ENCODE measurements at regions of chr5 and their contacts with region 1.

Region 1: DNA sequence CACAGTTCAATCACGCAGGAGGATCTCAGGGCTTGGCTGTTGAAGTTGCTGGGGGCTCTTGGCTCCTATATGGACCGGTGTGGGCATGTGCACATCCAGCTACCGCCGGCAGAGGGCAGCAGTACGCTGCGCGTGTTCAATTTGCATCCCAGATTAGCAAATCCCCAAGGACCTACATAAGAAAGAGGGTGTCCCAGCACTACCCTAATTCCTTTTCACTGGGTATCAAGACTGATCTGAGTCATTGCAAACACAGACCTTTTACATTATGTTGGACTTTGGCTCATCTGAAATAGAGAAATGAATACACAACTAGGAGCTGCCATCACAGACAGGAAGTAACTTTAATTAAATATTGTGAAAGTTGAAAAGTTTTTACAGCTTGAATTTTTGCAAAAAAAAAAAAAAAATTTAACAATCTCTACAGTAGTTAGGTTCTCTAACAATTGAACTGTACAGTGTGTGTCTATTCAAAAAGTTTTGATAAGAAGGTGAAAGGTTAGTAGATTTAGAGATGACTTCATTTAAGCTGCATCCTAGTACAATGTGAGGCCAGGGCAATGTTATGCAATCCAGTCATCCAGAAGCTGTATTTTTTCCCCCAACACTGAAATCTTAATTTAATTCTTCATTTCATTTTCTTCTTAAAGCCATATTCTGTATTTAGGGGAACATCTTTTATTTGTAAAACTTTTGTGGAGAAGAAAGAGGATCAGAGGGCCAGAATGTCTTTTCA is 404.0 kb downstream of the EBF1 start:
- DNase-seq: peak; percentile 90
- H3K4me3 Mint-ChIP-seq: no peak overlapping the region
- H3K27ac Mint-ChIP-seq: no peak overlapping the region
- H3K4me1 Mint-ChIP-seq: peaks cover 2% of the 10 kb centered on the region
- H3K27me3 Mint-ChIP-seq: peaks cover 14% of the 10 kb centered on the region

Region 2: GRCh38 chr5:158174918-158175851 is 520.6 kb before region 1 on chr5:
- intact Hi-C with region 1: loop called (anchors 1 kb)
- DNase-seq: peak; percentile 84
- H3K4me3 Mint-ChIP-seq: no peak overlapping the region
- H3K27ac Mint-ChIP-seq: no peak overlapping the region
- H3K4me1 Mint-ChIP-seq: no peaks in the 10 kb centered on the region
- H3K27me3 Mint-ChIP-seq: no peaks in the 10 kb centered on the region

Region 3: DNA sequence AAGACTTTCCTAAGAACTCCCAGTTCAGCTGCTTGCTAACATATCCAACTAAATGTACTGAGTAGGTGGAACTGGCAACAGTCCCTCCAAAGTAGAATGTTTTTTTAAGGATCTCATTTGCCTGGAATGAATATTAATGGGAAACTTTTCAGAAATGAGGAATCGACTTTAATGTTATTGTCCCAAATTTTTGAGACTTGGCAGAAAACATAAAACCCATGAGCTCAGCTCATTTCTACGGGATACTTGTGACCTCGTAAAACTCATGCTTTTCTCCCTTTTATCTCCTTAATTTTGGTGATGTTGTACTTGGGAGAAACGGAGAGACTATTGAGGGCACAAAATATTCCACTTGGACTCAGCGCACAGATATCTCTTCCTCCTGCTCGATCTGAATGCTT is 107.2 kb after region 1 on chr5:
- intact Hi-C with region 1: no loop called
- DNase-seq: no peak
- H3K4me3 Mint-ChIP-seq: no peak overlapping the region
- H3K27ac Mint-ChIP-seq: no peak overlapping the region
- H3K4me1 Mint-ChIP-seq: peaks cover 2% of the 10 kb centered on the region
- H3K27me3 Mint-ChIP-seq: peaks cover 8% of the 10 kb centered on the region

Region 4: GRCh38 chr5:158943057-158943456 is 247.3 kb after region 1 on chr5:
- intact Hi-C with region 1: no loop called
- DNase-seq: no peak
- H3K4me3 Mint-ChIP-seq: no peak overlapping the region
- H3K27ac Mint-ChIP-seq: no peak overlapping the region
- H3K4me1 Mint-ChIP-seq: no peaks in the 10 kb centered on the region
- H3K27me3 Mint-ChIP-seq: peaks cover 4% of the 10 kb centered on the region

Region 5: DNA sequence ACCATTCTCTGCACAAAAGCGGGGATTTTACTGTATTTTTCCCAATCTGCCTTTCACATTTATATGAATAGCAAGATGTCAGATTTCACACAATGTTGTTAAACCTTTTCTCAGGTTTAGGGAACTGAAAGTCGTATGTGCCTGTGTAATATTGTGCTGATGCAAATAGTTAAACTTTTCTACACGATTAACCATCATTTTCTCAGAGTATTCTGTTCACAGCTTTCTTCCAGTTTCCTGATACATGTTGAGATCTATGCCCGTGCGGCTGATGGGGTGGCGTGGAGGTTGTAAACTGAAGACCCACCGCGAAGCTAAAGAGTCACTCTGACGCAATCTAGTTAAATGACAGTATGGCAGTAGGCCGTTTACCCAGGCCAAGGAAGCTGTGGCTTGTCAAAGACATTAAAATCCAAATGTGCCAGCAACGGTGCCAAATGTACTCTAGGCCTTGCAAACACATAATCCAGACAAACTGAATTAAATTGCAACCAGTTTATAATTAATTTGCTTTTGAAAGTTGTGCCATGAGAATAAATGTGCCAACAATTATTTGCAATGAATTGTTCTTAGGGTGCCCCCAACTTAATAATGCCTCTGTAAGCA is 258.3 kb after region 1 on chr5:
- intact Hi-C with region 1: no loop called
- DNase-seq: no peak
- H3K4me3 Mint-ChIP-seq: no peak overlapping the region
- H3K27ac Mint-ChIP-seq: no peak overlapping the region
- H3K4me1 Mint-ChIP-seq: peaks cover 9% of the 10 kb centered on the region
- H3K27me3 Mint-ChIP-seq: no peaks in the 10 kb centered on the region